Naive thymus-derived CD4-positive, alpha-beta T cell (primary cell): ENCODE measurements at regions of chr1 and their contacts with region 1.

Region 1: DNA sequence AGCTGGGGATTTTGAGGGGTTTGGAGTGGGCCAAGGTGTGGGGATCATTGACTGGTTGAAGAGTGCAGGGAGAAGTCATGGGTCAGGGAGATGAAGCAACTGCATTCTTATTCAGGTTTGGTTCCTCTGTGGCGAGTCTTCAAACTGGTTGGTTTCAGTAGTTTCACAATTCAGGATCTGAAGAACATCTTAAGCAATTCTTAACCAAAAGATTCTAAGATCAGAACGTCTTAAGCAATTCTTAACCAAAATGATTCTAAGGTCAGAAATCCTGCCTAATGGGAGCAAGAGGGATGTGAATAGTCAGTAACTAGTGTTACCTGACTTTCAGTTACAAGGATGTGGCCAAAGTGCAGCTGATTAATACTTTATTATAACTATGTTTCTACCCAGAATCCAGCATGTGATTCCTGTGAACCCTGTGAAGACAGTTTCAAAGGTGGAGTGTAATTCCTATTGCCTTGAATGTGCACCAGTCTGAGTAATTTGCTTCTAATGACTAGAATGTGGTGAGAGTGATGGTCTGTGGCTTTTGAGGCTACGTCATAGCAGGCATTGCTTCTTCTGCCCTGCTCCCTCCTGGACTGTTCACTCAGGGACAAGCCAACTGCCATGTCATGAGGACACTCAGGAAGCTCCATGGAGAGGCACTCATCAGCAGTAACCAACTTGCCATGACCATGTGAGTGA is 61.2 kb downstream of the OLFML3 start:
- DNase-seq: no peak
- ATAC-seq: peak; percentile 73
- H3K4me3 ChIP-seq: no peak overlapping the region
- H3K4me3 Mint-ChIP-seq: no peak overlapping the region
- H3K27ac ChIP-seq: no peak overlapping the region
- H3K27ac Mint-ChIP-seq: no peak overlapping the region
- H3K4me1 ChIP-seq: no peaks in the 10 kb centered on the region
- H3K4me1 Mint-ChIP-seq: peaks cover 0 to 4% (median 0%) of the 10 kb centered on the region in 7 donors
- H3K27me3 ChIP-seq: no peaks in the 10 kb centered on the region
- H3K27me3 Mint-ChIP-seq: peaks cover 0 to 2% (median 0%) of the 10 kb centered on the region in 5 donors

Region 2: GRCh38 chr1:113940365-113941244 is 99.9 kb before region 1 on chr1:
- CTCF ChIA-PET with region 1: no interaction called
- POLR2A ChIA-PET with region 1: no interaction called
- intact Hi-C with region 1: no loop called
- DNase-seq: peak in 6 of 9 donors; percentile 31 to 55 (median 43)
- ATAC-seq: peak; percentile 67
- H3K4me3 ChIP-seq: peak overlapping the region; percentile 29
- H3K4me3 Mint-ChIP-seq: peak overlapping the region; percentile 64 to 87 (median 80)
- H3K27ac ChIP-seq: peak overlapping the region; percentile 46
- H3K27ac Mint-ChIP-seq: peak overlapping the region; percentile 85 to 98 (median 94)
- H3K4me1 ChIP-seq: peaks cover 48 to 74% of the 10 kb centered on the region in 2 donors
- H3K4me1 Mint-ChIP-seq: peaks cover 58 to 88% (median 79%) of the 10 kb centered on the region in 7 donors
- H3K27me3 ChIP-seq: no peaks in the 10 kb centered on the region
- H3K27me3 Mint-ChIP-seq: no peaks in the 10 kb centered on the region

Region 3: GRCh38 chr1:113963281-113963906 is 77.1 kb before region 1 on chr1:
- CTCF ChIA-PET with region 1: no interaction called
- POLR2A ChIA-PET with region 1: no interaction called
- intact Hi-C with region 1: no loop called
- DNase-seq: peak in 3 of 9 donors; percentile 25 to 46 (median 39)
- ATAC-seq: peak; percentile 68
- H3K4me3 ChIP-seq: no peak overlapping the region
- H3K4me3 Mint-ChIP-seq: no peak overlapping the region
- H3K27ac ChIP-seq: no peak overlapping the region
- H3K27ac Mint-ChIP-seq: peak overlapping the region in 8 of 9 donors; percentile 22 to 87 (median 76)
- H3K4me1 ChIP-seq: no peaks in the 10 kb centered on the region
- H3K4me1 Mint-ChIP-seq: peaks cover 4 to 35% (median 20%) of the 10 kb centered on the region in 7 donors
- H3K27me3 ChIP-seq: no peaks in the 10 kb centered on the region
- H3K27me3 Mint-ChIP-seq: no peaks in the 10 kb centered on the region

Region 4: GRCh38 chr1:114002492-114003239 is 37.8 kb before region 1 on chr1:
- CTCF ChIA-PET with region 1: no interaction called
- POLR2A ChIA-PET with region 1: no interaction called
- intact Hi-C with region 1: no loop called
- DNase-seq: no peak
- ATAC-seq: no peak
- H3K4me3 ChIP-seq: no peak overlapping the region
- H3K4me3 Mint-ChIP-seq: no peak overlapping the region
- H3K27ac ChIP-seq: no peak overlapping the region
- H3K27ac Mint-ChIP-seq: no peak overlapping the region
- H3K4me1 ChIP-seq: no peaks in the 10 kb centered on the region
- H3K4me1 Mint-ChIP-seq: peaks cover 0 to 10% (median 7%) of the 10 kb centered on the region in 7 donors
- H3K27me3 ChIP-seq: no peaks in the 10 kb centered on the region
- H3K27me3 Mint-ChIP-seq: peaks cover 0 to 16% (median 4%) of the 10 kb centered on the region in 5 donors

Region 5: DNA sequence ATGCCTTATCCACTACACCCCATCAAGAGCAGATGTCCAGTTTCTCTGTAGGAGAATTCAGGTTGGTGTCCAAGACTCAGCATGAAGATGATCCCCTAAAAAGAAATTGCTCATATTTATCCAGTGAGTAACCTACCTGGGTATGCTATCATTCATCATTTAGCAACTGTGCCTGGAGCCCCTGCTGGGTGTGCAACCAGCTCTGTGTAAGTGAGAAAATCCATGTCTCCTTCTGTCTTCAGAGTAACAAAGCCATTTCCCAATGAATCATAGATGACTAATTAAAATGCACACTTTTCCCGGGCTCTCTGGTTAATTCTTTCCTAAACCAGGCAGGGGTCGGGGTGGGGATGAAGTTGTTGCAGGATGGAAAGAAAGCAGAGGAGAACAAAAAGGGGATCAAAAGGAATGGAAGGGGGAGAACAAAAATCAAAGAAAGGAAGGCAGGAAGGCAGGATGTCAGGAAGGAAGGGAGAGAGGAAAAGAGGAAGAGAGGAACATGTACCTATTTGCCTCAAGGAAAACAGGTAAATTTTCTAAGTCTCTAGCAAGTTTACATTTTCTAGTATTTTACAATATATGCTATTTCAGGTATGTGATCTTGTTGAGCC is 25.3 kb before region 1 on chr1:
- CTCF ChIA-PET with region 1: no interaction called
- POLR2A ChIA-PET with region 1: no interaction called
- intact Hi-C with region 1: no loop called
- DNase-seq: no peak
- ATAC-seq: no peak
- H3K4me3 ChIP-seq: no peak overlapping the region
- H3K4me3 Mint-ChIP-seq: no peak overlapping the region
- H3K27ac ChIP-seq: no peak overlapping the region
- H3K27ac Mint-ChIP-seq: no peak overlapping the region
- H3K4me1 ChIP-seq: no peaks in the 10 kb centered on the region
- H3K4me1 Mint-ChIP-seq: no peaks in the 10 kb centered on the region
- H3K27me3 ChIP-seq: no peaks in the 10 kb centered on the region
- H3K27me3 Mint-ChIP-seq: peaks cover 3 to 23% (median 9%) of the 10 kb centered on the region in 5 donors

Region 6: GRCh38 chr1:114063579-114063978 is 23.1 kb after region 1 on chr1:
- CTCF ChIA-PET with region 1: no interaction called
- POLR2A ChIA-PET with region 1: no interaction called
- intact Hi-C with region 1: loop called in 1 of 2 experiments (anchors 1 kb)
- DNase-seq: no peak
- ATAC-seq: no peak
- H3K4me3 ChIP-seq: no peak overlapping the region
- H3K4me3 Mint-ChIP-seq: no peak overlapping the region
- H3K27ac ChIP-seq: no peak overlapping the region
- H3K27ac Mint-ChIP-seq: no peak overlapping the region
- H3K4me1 ChIP-seq: no peaks in the 10 kb centered on the region
- H3K4me1 Mint-ChIP-seq: peaks cover 0 to 3% (median 0%) of the 10 kb centered on the region in 7 donors
- H3K27me3 ChIP-seq: no peaks in the 10 kb centered on the region
- H3K27me3 Mint-ChIP-seq: peaks cover 0 to 10% (median 4%) of the 10 kb centered on the region in 5 donors